CD8-positive, alpha-beta T cell (primary cell): ENCODE measurements at regions of chr17 and their contacts with region 1.

Region 1: GRCh38 chr17:42248351-42249179 is 27.6 kb downstream of the STAT5B start:
- DNase-seq: peak; percentile 60 to 96 (median 80)
- ATAC-seq: peak; percentile 85
- H3K4me3 ChIP-seq: peak overlapping the region; percentile 36 to 46
- H3K4me3 Mint-ChIP-seq: peak overlapping the region; percentile 81
- H3K27ac ChIP-seq: peak overlapping the region; percentile 87 to 90
- H3K27ac Mint-ChIP-seq: peak overlapping the region; percentile 98
- H3K4me1 ChIP-seq: peaks cover 55% of the 10 kb centered on the region
- H3K4me1 Mint-ChIP-seq: peaks cover 70% of the 10 kb centered on the region
- H3K27me3 ChIP-seq: no peaks in the 10 kb centered on the region
- H3K27me3 Mint-ChIP-seq: no peaks in the 10 kb centered on the region
- CTCF ChIP-seq: no peak

Region 2: DNA sequence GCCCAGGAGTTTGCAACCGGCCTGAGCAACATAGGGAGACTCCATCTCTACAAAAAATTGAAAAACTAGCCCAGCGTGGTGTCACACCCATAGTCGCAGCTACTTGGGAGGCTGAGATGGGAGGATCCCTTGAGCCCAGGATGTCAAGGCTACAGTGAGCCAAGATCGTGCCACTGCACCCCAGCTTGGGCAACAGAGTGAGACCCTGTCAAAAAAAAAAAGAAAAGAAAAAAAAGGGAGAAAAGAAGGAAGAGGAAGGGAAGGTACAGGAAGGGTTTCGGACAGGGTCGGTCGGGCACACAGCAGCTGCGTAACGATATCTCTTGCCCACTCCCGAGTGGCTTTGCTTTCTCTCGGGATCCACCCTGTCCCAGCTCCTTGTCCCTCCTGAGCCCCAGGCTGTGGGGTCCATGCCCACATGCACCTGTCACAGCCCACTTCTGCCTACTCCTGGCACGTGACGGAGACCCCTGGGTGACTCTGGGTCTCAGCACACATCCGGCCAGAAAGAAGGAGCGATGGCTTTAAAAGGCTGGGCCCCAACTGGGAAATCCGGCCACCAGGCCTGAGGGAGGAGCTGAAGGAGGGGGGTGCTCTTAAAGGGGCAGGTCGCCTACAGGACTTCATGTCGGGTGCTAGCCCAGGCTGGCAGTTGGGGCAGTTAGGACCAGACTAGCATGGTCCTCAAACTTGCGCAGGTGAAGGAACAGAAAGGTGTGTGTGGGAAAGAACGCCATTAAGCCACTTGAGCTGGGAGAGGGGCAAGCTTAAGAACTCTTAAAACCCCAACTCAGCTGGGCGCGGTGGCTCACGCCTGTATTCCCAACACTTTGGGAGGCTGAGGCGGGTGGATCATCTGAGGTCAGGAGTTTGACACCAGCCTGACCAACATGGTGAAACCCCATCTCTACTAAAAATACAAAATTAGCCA is 54.3 kb before region 1 on chr17 and contains the start of gene GHDC:
- CTCF ChIA-PET with region 1: no interaction called
- POLR2A ChIA-PET with region 1: interaction called, 5 read pairs
- intact Hi-C with region 1: loop called in 1 of 2 experiments (anchors 2 kb)
- DNase-seq: peak; percentile 50 to 86 (median 76)
- ATAC-seq: peak; percentile 98
- H3K4me3 ChIP-seq: peak within 1 kb of the TSS; percentile 79 to 93
- H3K4me3 Mint-ChIP-seq: peak within 1 kb of the TSS; percentile 95
- H3K27ac ChIP-seq: peak within 1 kb of the TSS; percentile 49 to 82
- H3K27ac Mint-ChIP-seq: peak within 1 kb of the TSS; percentile 88
- H3K4me1 ChIP-seq: peaks cover 22% of the 10 kb centered on the region
- H3K4me1 Mint-ChIP-seq: peaks cover 22% of the 10 kb centered on the region
- H3K27me3 ChIP-seq: no peaks in the 10 kb centered on the region
- H3K27me3 Mint-ChIP-seq: no peaks in the 10 kb centered on the region
- CTCF ChIP-seq: no peak
- total RNA-seq, gene GHDC: 6.6 to 6.7 TPM

Region 3: GRCh38 chr17:42260318-42260717 is 11.8 kb after region 1 on chr17:
- CTCF ChIA-PET with region 1: interaction called, 3 read pairs
- POLR2A ChIA-PET with region 1: interaction called, 21 read pairs
- intact Hi-C with region 1: no loop called
- DNase-seq: no peak
- ATAC-seq: no peak
- H3K4me3 ChIP-seq: no peak overlapping the region
- H3K4me3 Mint-ChIP-seq: no peak overlapping the region
- H3K27ac ChIP-seq: no peak overlapping the region
- H3K27ac Mint-ChIP-seq: peak overlapping the region; percentile 41
- H3K4me1 ChIP-seq: peaks cover 3% of the 10 kb centered on the region
- H3K4me1 Mint-ChIP-seq: peaks cover 37% of the 10 kb centered on the region
- H3K27me3 ChIP-seq: no peaks in the 10 kb centered on the region
- H3K27me3 Mint-ChIP-seq: no peaks in the 10 kb centered on the region
- CTCF ChIP-seq: no peak

Region 4: DNA sequence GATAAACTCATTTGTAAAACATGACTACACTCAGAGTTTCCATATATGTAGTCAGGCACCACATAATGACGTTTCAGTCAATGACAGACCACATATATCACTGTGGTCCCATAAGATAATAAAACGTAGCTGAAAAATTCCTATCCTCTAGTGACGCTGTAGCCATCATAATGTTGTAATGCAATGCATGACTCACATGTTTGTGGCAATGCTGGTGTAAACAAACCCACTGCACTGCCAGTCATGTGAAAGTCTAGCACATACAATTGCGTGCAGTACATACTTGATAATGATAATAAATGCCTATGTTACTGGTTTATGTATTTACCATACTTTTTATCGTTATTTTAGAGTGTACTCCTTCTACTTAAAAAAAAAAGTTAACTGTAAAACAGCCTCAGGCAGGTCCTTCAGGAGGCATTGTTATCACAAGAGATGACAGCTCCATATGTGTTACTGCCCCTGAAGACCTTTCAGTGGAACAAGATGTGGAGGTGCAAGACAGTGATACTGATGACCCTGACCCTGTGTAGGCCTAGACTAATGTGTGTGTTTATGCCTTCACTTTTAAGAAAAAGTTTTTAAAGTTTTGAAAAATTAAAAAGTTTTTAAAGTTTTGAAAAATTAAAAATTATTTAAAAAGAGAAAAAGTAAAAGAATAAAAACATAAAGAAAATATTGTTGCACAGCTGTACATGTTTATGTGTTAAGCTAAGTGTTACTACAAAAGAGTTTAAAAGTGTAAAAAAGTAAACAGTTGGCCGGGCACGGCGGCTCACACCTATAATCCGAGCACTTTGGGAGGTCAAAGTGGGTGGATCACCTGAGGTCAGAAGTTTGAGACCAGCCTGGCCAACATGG is 18.6 kb after region 1 on chr17:
- CTCF ChIA-PET with region 1: interaction called, 18 read pairs
- POLR2A ChIA-PET with region 1: interaction called, 15 read pairs
- intact Hi-C with region 1: loop called in 1 of 2 experiments (anchors 1 kb)
- DNase-seq: peak in 5 of 9 experiments; percentile 44 to 92 (median 79)
- ATAC-seq: peak; percentile 85
- H3K4me3 ChIP-seq: no peak overlapping the region
- H3K4me3 Mint-ChIP-seq: peak overlapping the region; percentile 18
- H3K27ac ChIP-seq: peak overlapping the region in 1 of 2 experiments; percentile 68
- H3K27ac Mint-ChIP-seq: peak overlapping the region; percentile 91
- H3K4me1 ChIP-seq: peaks cover 37% of the 10 kb centered on the region
- H3K4me1 Mint-ChIP-seq: peaks cover 55% of the 10 kb centered on the region
- H3K27me3 ChIP-seq: no peaks in the 10 kb centered on the region
- H3K27me3 Mint-ChIP-seq: no peaks in the 10 kb centered on the region
- CTCF ChIP-seq: no peak

Region 5: DNA sequence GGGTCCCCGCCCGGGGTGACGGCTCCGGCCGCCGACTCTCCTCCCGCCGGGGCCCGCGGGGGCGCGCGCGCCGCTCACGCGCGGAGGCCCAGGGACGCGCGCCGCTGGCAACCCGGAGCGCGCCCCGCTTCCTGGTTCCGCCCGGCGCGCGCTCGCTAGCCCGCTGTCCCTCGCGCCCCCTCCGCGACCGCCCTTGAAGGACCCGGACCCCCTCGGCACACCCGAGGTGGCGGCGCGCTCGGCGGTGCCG is 27.7 kb after region 1 on chr17 and contains the start of gene STAT5B:
- CTCF ChIA-PET with region 1: interaction called, 18 read pairs
- POLR2A ChIA-PET with region 1: interaction called, 38 read pairs
- intact Hi-C with region 1: loop called (anchors 1 kb)
- DNase-seq: peak; percentile 30 to 89 (median 66)
- ATAC-seq: peak; percentile 33
- H3K4me3 ChIP-seq: peak within 1 kb of the TSS; percentile 72 to 84
- H3K4me3 Mint-ChIP-seq: peak within 1 kb of the TSS; percentile 96
- H3K27ac ChIP-seq: peak within 1 kb of the TSS; percentile 77 to 83
- H3K27ac Mint-ChIP-seq: peak within 1 kb of the TSS; percentile 98
- H3K4me1 ChIP-seq: peaks cover 48% of the 10 kb centered on the region
- H3K4me1 Mint-ChIP-seq: peaks cover 52% of the 10 kb centered on the region
- H3K27me3 ChIP-seq: no peaks in the 10 kb centered on the region
- H3K27me3 Mint-ChIP-seq: no peaks in the 10 kb centered on the region
- CTCF ChIP-seq: no peak
- total RNA-seq, gene STAT5B: 85.2 to 85.5 TPM

Region 6: GRCh38 chr17:42287926-42288802 is 39.6 kb after region 1 on chr17 and contains the start of gene STAT5A:
- CTCF ChIA-PET with region 1: interaction called, 3 read pairs
- POLR2A ChIA-PET with region 1: interaction called, 61 read pairs
- intact Hi-C with region 1: loop called (anchors 1 kb)
- DNase-seq: peak; percentile 63 to 92 (median 81)
- ATAC-seq: peak; percentile 78
- H3K4me3 ChIP-seq: peak within 1 kb of the TSS; percentile 74 to 84
- H3K4me3 Mint-ChIP-seq: peak within 1 kb of the TSS; percentile 94
- H3K27ac ChIP-seq: peak within 1 kb of the TSS; percentile 87 to 94
- H3K27ac Mint-ChIP-seq: peak within 1 kb of the TSS; percentile 98
- H3K4me1 ChIP-seq: peaks cover 35% of the 10 kb centered on the region
- H3K4me1 Mint-ChIP-seq: peaks cover 50% of the 10 kb centered on the region
- H3K27me3 ChIP-seq: no peaks in the 10 kb centered on the region
- H3K27me3 Mint-ChIP-seq: no peaks in the 10 kb centered on the region
- CTCF ChIP-seq: no peak
- total RNA-seq, gene STAT5A: 300 to 319 TPM

Region 7: DNA sequence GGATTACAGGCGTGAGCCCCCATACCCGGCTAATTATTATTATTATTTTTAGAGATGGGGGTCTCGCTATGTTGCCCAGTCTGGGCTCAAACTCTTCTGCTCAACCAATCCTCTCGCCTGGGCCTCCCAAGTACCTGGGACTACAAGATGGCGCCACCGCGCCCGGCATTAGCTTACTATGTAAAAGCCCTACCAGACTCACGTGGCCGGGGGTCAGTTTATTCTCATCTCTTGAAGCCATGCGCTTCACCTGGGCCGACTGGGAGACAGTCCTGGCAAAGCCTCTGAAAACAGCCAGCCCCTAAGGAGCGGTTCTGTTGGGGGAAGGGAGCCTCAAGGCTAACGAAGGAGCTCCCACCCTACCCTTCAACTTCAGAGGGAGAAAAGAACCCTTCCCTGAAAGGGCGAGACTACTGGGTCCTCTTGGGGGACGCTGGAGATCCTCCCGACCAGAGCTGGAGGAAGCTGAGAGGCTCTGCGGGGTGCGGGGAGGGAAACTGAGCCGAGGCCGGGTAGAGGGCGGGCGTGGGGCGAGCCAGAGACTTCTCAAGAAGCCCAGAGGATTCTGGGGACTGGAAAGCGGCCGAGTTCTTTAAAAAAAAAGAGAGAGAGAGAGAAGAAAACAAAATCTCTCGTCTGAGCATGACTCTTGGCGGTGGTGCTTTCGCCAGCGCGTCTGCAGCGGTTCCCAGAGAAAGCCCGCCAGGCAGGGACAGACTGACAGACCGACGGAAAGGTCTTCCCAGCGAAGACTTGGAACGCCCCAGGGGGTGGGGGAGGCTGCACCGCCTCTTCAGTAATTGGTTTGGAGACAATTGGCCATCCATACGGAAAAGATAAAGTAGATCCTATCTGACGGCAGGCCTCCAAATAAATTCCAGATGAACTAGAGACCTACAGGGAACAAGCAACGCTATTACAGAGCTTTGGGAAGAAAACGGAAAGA is 404.9 kb after region 1 on chr17:
- CTCF ChIA-PET with region 1: no interaction called
- POLR2A ChIA-PET with region 1: no interaction called
- intact Hi-C with region 1: no loop called
- DNase-seq: no peak
- ATAC-seq: no peak
- H3K4me3 ChIP-seq: no peak overlapping the region
- H3K4me3 Mint-ChIP-seq: no peak overlapping the region
- H3K27ac ChIP-seq: no peak overlapping the region
- H3K27ac Mint-ChIP-seq: no peak overlapping the region
- H3K4me1 ChIP-seq: no peaks in the 10 kb centered on the region
- H3K4me1 Mint-ChIP-seq: peaks cover 8% of the 10 kb centered on the region
- H3K27me3 ChIP-seq: no peaks in the 10 kb centered on the region
- H3K27me3 Mint-ChIP-seq: peaks cover 21% of the 10 kb centered on the region
- CTCF ChIP-seq: no peak

Region 8: DNA sequence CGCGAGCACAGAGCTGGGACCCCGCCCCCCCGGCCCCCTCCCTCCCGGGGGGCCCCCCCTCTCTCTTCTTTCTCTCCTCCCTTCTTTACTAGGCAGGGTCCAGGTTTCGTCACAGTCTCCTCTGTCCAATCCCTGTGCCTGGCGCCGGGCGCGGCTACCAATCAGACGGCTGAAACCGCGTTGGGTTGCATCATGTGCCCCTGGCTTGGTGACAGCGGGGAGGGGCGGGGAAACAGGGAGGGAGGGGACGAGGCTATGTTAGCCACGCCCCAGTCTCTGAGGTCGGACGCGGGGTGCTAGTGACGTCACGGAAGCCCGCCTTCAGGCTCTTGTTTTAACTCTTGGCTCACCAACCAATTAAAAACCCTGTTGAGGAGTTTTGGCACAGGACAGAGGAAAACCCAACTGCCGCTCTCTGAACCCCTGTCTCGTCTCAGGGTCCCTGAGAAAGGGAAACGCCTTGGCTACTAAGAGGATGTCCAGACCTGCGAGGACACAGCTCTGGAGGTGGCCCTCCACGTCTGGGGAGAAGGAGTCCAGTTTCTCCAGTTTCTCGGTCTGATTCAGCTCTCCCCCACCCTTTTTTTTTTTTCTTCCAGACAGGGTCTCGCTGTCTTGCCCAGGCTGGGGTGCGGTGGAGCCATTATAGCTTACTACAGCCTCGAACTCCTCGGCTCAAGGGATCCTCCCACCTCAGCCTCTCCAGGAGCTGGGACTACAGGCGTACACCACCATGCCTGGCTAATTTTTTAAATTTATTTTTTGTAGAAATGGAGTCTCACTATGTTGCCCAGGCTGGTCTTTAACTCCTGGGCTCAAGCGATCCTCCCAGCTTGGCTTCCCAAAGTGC is 428.7 kb after region 1 on chr17:
- CTCF ChIA-PET with region 1: no interaction called
- POLR2A ChIA-PET with region 1: no interaction called
- intact Hi-C with region 1: loop called in 1 of 2 experiments (anchors 5 kb)
- DNase-seq: peak; percentile 94 to 99 (median 97)
- ATAC-seq: peak; percentile 85
- H3K4me3 ChIP-seq: peak overlapping the region; percentile 54 to 62
- H3K4me3 Mint-ChIP-seq: peak overlapping the region; percentile 87
- H3K27ac ChIP-seq: peak overlapping the region; percentile 25 to 49
- H3K27ac Mint-ChIP-seq: peak overlapping the region; percentile 27
- H3K4me1 ChIP-seq: peaks cover 65% of the 10 kb centered on the region
- H3K4me1 Mint-ChIP-seq: peaks cover 51% of the 10 kb centered on the region
- H3K27me3 ChIP-seq: peaks cover 31 to 58% of the 10 kb centered on the region in 2 experiments
- H3K27me3 Mint-ChIP-seq: peaks cover 41% of the 10 kb centered on the region
- CTCF ChIP-seq: no peak